ENCODE measurements at regions of chr5 and their contacts with region 1.

Region 1: GRCh38 chr5:172714491-172715421 is 56.2 kb downstream of the DUSP1 start:
- DNase-seq: peak; percentile 76 to 84
- ATAC-seq: peak; percentile 45 to 81 (median 78)
- H3K4me3 ChIP-seq: no peak overlapping the region
- H3K27ac ChIP-seq: peak overlapping the region; percentile 66 to 91 (median 83)
- H3K4me1 ChIP-seq: peaks cover 16 to 53% (median 41%) of the 10 kb centered on the region in 9 donors
- H3K27me3 ChIP-seq: peaks cover 0 to 5% (median 0%) of the 10 kb centered on the region in 7 donors
- CTCF ChIP-seq: peak; percentile 80 to 93 (median 86)

Region 2: GRCh38 chr5:172395483-172395882 is 319.3 kb before region 1 on chr5:
- intact Hi-C with region 1: no loop called
- DNase-seq: no peak
- ATAC-seq: no peak
- H3K4me3 ChIP-seq: no peak overlapping the region
- H3K27ac ChIP-seq: no peak overlapping the region
- H3K4me1 ChIP-seq: peaks cover 0 to 8% (median 0%) of the 10 kb centered on the region in 9 donors
- H3K27me3 ChIP-seq: no peaks in the 10 kb centered on the region
- CTCF ChIP-seq: no peak

Region 3: DNA sequence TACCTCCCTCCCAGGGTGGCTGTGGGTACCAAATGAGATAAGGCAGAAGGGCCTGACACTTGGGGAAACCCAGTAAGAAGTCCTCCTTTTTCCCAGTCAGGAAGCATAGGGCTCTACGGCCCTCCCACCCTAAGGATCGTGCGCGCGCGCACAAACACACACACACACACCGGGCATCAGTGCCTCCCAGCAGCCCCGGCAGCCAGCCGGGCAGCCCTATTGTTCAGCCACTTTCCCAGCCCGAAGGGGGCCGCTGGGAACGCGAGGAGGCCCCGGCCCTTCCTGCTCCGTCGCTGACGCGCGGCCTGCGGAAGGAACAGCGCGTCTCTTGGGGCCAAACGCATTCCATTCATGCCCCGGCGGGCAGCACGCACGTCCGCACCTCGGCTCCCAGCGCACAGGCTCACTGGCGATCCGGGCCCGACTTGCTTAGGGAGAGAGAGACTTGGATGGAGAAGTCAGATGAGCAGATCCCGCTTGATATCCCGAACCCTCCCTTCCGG is 33.6 kb after region 1 on chr5:
- intact Hi-C with region 1: loop called in 3 of 10 experiments (anchors 2 kb)
- DNase-seq: peak; percentile 91
- ATAC-seq: peak; percentile 77 to 92 (median 89)
- H3K4me3 ChIP-seq: peak overlapping the region in 6 of 10 donors; percentile 3 to 33 (median 14)
- H3K27ac ChIP-seq: peak overlapping the region; percentile 83 to 99 (median 95)
- H3K4me1 ChIP-seq: peaks cover 31 to 69% (median 46%) of the 10 kb centered on the region in 9 donors
- H3K27me3 ChIP-seq: no peaks in the 10 kb centered on the region
- CTCF ChIP-seq: peak in 1 of 9 donors; percentile 28

Region 4: GRCh38 chr5:172764849-172765765 is 50.4 kb after region 1 on chr5:
- intact Hi-C with region 1: loop called in 7 of 10 experiments (anchors 1 to 5 kb)
- DNase-seq: peak; percentile 90 to 100
- ATAC-seq: peak; percentile 64 to 82 (median 72)
- H3K4me3 ChIP-seq: peak overlapping the region in 9 of 10 donors; percentile 6 to 99 (median 93)
- H3K27ac ChIP-seq: peak overlapping the region; percentile 95 to 100 (median 100)
- H3K4me1 ChIP-seq: peaks cover 8 to 63% (median 37%) of the 10 kb centered on the region in 9 donors
- H3K27me3 ChIP-seq: no peaks in the 10 kb centered on the region
- CTCF ChIP-seq: no peak

Region 5: GRCh38 chr5:172777881-172778814 is 63.4 kb after region 1 on chr5:
- intact Hi-C with region 1: loop called in 5 of 10 experiments (anchors 2 to 5 kb)
- DNase-seq: no peak
- ATAC-seq: peak in 2 of 8 donors; percentile 16 to 45
- H3K4me3 ChIP-seq: peak overlapping the region in 1 of 10 donors; percentile 11
- H3K27ac ChIP-seq: peak overlapping the region in 8 of 10 donors; percentile 37 to 100 (median 72)
- H3K4me1 ChIP-seq: peaks cover 0 to 71% (median 4%) of the 10 kb centered on the region in 9 donors
- H3K27me3 ChIP-seq: no peaks in the 10 kb centered on the region
- CTCF ChIP-seq: no peak

Region 6: DNA sequence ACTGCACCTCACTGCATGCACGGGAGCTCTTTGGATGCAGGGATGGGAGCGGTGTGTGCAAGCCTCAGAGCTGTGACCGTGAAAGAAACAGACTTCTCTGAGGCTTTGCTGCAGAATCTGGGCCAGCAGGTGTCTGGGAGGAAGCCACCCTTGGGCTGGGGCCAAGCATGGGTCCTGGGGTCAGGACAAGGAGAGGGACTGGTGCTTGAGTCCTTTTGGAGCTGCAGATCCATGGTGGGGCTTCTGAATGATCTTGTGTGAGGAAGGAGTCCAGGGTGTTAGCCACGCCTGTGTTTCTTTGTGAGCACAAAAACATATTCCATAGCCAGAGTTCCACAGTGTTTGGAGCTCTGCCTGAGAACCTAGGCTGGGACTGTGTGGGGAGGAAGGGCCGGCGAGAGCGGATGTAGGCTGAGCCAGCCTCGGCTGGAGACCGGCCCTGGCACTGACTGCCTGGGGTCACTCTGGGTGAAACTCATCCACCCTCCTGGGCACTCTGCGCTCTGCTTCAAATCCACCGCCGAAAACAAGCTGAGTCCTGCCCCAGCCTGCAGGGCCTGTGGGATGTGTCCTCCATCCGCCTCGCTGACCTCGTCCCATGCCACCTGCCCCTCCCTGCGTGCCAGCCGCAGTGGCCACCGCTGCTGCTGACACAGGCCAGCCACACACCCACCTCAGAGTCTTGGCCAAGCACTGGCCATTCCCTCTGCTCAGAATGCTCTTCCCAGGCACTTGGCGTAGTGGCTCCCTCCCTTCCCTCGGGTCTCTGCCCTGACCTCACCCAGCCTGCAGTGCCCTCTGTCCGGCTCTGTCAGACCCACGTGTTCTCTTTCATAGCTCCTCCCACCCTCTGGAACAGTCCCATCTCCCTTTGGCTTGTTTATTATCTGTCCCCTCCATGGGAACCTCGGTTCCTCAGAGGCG is 146.0 kb after region 1 on chr5:
- intact Hi-C with region 1: loop called in 1 of 10 experiments (anchors 5 kb)
- DNase-seq: peak; percentile 88 to 92
- ATAC-seq: peak; percentile 86 to 94 (median 90)
- H3K4me3 ChIP-seq: peak overlapping the region in 7 of 10 donors; percentile 1 to 39 (median 20)
- H3K27ac ChIP-seq: peak overlapping the region; percentile 86 to 97 (median 92)
- H3K4me1 ChIP-seq: peaks cover 41 to 82% (median 65%) of the 10 kb centered on the region in 9 donors
- H3K27me3 ChIP-seq: no peaks in the 10 kb centered on the region
- CTCF ChIP-seq: no peak

Region 7: DNA sequence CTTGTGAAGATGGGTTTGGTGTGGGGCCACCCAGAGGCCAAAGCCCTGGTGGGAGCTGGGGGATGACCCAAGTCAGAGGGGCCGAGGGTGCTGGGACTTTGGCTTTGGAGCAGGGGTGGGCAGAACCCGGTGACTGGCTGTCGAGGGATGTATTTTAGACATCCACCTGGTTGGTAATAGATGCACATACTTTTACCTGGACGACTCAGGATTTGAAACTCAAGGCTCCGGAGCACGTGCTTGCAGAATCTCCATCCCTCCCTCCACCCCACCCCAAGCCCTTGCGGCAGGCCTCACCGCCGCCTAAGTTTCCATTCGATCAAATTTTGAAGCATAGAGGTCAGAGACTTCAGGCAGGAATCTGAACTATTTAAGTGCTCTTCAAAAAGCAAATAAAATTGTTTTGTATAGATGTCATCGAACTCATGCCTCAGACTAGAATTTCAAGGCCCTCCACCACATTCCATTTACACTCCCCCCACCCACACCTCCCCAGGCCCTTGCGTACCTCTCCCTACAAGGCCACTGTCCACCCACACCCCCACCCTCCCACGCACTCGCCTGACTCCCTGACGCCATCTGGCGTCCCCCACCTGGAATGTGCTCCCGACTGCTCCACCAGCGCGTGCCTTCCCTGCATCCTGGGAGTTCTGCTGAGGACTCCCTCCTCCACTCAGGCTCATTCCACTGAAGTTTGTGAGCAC is 187.9 kb after region 1 on chr5:
- intact Hi-C with region 1: loop called in 2 of 10 experiments (anchors 2 to 10 kb)
- DNase-seq: peak; percentile 81 to 82
- ATAC-seq: peak; percentile 61 to 77 (median 68)
- H3K4me3 ChIP-seq: no peak overlapping the region
- H3K27ac ChIP-seq: peak overlapping the region; percentile 47 to 98 (median 82)
- H3K4me1 ChIP-seq: peaks cover 37 to 86% (median 71%) of the 10 kb centered on the region in 9 donors
- H3K27me3 ChIP-seq: no peaks in the 10 kb centered on the region
- CTCF ChIP-seq: peak; percentile 23 to 70 (median 56)

Region 8: GRCh38 chr5:172932313-172933017 is 217.7 kb after region 1 on chr5:
- intact Hi-C with region 1: loop called (anchors 1 to 2 kb)
- DNase-seq: peak; percentile 67 to 79
- ATAC-seq: peak; percentile 77 to 91 (median 85)
- H3K4me3 ChIP-seq: no peak overlapping the region
- H3K27ac ChIP-seq: peak overlapping the region in 9 of 10 donors; percentile 44 to 81 (median 74)
- H3K4me1 ChIP-seq: peaks cover 13 to 28% (median 21%) of the 10 kb centered on the region in 9 donors
- H3K27me3 ChIP-seq: no peaks in the 10 kb centered on the region
- CTCF ChIP-seq: peak; percentile 94 to 98 (median 97)

Measured in heart right ventricle (tissue), 16 donors.